ENCODE measurements at regions of chr9 and their contacts with region 1.

Region 1: DNA sequence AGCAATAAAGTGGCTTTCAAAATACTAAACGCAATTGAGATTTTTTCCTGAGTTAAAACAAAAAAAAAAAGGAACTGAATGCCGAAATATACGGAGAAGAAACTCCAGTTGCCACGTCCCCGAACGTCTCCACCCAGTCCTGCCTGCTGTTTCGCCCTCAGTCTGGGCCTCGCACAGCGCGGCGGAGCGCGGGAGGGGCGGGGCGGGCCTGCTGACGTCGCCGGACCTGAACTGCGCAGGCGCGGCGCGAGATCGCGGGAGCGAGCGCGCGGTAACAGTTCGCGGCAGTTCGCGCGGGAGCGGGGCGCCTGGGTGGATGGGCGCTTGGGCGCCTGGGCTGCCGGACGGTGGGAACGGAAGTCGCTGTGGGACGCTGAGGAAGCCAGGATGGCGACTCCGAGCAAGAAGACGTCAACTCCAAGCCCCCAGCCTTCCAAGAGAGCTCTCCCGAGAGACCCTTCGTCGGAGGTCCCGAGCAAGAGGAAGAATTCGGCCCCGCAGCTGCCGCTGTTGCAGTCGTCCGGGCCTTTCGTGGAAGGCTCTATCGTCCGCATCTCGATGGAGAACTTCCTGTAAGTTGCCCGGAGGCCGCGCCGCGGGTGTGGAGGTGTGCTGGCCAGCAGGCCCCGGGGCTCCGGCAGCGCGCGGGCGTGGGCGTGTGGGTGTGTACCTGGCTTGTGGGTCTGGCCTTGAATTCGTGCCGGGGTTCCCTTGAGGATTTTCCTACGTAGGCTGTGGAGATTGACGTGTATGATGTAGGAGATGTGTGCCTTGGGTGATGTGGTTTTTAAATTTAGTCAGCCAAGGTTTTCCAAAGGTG is at the start of gene SMC5:
- DNase-seq: peak; percentile 95
- ATAC-seq: peak; percentile 86
- H3K4me3 ChIP-seq: peak within 1 kb of the TSS; percentile 72 to 96 (median 93)
- H3K4me3 Mint-ChIP-seq: peak within 1 kb of the TSS; percentile 92
- H3K27ac ChIP-seq: peak within 1 kb of the TSS; percentile 89 to 93
- H3K27ac Mint-ChIP-seq: peak within 1 kb of the TSS; percentile 97
- H3K4me1 ChIP-seq: peaks cover 26 to 34% of the 10 kb centered on the region in 2 donors
- H3K4me1 Mint-ChIP-seq: peaks cover 45% of the 10 kb centered on the region
- H3K27me3 ChIP-seq: no peaks in the 10 kb centered on the region
- H3K27me3 Mint-ChIP-seq: no peaks in the 10 kb centered on the region
- CTCF ChIP-seq: no peak
- total RNA-seq, gene SMC5: 75.0 and 82.1 TPM in 2 replicates

Region 2: DNA sequence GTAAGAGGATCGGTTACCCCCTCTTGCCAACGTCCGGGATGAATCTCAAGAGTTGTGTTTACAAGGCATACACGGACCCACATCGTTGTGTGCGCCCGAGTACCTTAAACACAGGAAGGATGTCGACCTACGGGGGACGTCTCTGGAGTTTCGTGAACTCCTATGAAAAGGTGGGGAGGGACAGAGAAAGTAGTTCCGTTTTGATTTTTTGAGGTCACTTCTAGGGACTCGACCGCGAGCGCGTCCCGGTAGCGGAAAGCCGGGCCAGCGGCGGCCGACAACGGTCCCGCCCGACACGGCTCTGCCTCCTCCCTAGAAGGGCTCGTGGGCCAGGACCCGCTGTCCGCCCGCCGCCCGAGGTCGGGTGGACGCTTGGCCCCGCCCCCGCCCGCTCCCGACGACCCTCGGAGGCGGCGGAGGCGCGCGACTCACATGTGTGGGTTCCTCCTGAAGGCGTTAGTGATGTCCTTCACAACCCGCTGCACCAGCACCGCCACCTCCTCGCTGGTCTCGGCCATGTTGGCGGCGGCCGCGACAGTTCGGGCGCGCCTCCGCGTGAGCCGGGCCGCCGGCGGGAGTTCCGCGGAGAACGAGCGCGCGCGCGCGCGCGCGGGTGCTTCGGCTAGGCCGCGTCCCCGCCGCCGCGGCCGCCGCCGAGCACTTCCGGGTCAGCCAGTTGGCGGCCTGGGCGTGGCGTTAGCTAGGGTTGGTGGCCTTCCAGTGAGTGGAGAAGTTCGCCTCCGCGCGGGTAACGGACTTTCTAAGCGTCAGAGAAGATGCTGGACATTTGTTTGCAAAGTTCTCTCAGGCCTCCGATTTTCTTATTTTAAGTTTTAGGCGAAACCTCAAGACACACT is 499.3 kb before region 1 on chr9 and contains the start of gene PTAR1:
- CTCF ChIA-PET with region 1: no interaction called
- POLR2A ChIA-PET with region 1: no interaction called
- intact Hi-C with region 1: loop called (anchors 1 kb)
- DNase-seq: peak; percentile 95
- ATAC-seq: peak; percentile 86
- H3K4me3 ChIP-seq: peak within 1 kb of the TSS; percentile 84 to 90 (median 89)
- H3K4me3 Mint-ChIP-seq: peak within 1 kb of the TSS; percentile 97
- H3K27ac ChIP-seq: peak within 1 kb of the TSS; percentile 77 to 94
- H3K27ac Mint-ChIP-seq: peak within 1 kb of the TSS; percentile 97
- H3K4me1 ChIP-seq: peaks cover 12 to 13% of the 10 kb centered on the region in 2 donors
- H3K4me1 Mint-ChIP-seq: peaks cover 26% of the 10 kb centered on the region
- H3K27me3 ChIP-seq: no peaks in the 10 kb centered on the region
- H3K27me3 Mint-ChIP-seq: no peaks in the 10 kb centered on the region
- CTCF ChIP-seq: no peak
- total RNA-seq, gene PTAR1: 72.1 and 82.7 TPM in 2 replicates

Region 3: DNA sequence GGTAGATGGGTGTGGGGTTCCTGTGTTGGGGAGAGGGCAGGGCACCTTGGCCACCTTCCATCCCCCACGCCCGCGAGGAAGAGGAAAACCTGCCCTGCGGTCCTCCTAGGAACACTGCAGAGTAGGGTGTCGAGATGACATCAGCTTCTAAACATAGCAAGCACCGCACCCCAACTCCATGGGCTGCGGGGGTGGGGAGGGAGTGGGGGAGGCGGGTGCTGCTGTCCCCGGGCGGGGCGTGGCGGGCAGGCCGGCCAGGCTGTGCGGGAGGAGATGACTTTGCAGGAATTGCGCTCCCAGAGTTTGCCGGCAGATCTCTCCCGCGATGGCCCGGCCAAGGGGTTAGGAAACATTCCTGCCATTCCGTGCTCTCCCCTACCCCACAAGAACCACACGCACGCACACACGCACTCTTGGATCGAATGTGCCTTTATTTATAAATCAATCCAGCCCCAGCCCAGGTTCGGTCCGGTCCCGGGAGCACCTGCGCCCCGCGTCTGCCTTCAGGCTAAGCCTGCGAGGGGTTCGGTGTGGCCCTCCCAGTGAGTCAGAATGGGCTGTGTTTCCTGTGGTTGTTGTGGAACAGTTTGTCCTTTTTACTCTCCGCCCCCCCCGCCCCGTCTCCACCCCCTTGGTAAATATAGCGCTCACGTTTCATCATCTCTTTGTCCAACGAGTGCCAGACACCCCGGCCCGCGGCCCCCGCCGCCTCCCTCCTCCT is 160.8 kb after region 1 on chr9:
- CTCF ChIA-PET with region 1: interaction called, 3 read pairs
- POLR2A ChIA-PET with region 1: no interaction called
- intact Hi-C with region 1: loop called (anchors 1 kb)
- DNase-seq: peak; percentile 89
- ATAC-seq: peak; percentile 51
- H3K4me3 ChIP-seq: peak overlapping the region; percentile 38 to 89 (median 77)
- H3K4me3 Mint-ChIP-seq: peak overlapping the region; percentile 96
- H3K27ac ChIP-seq: peak overlapping the region; percentile 94 to 99
- H3K27ac Mint-ChIP-seq: peak overlapping the region; percentile 100
- H3K4me1 ChIP-seq: peaks cover 21 to 36% of the 10 kb centered on the region in 2 donors
- H3K4me1 Mint-ChIP-seq: peaks cover 43% of the 10 kb centered on the region
- H3K27me3 ChIP-seq: no peaks in the 10 kb centered on the region
- H3K27me3 Mint-ChIP-seq: no peaks in the 10 kb centered on the region
- CTCF ChIP-seq: no peak

Region 4: GRCh38 chr9:70609542-70610286 is 350.8 kb after region 1 on chr9:
- CTCF ChIA-PET with region 1: no interaction called
- POLR2A ChIA-PET with region 1: no interaction called
- intact Hi-C with region 1: loop called (anchors 5 kb)
- DNase-seq: no peak
- ATAC-seq: no peak
- H3K4me3 ChIP-seq: no peak overlapping the region
- H3K4me3 Mint-ChIP-seq: no peak overlapping the region
- H3K27ac ChIP-seq: no peak overlapping the region
- H3K27ac Mint-ChIP-seq: no peak overlapping the region
- H3K4me1 ChIP-seq: peaks cover 7 to 8% of the 10 kb centered on the region in 2 donors
- H3K4me1 Mint-ChIP-seq: peaks cover 10% of the 10 kb centered on the region
- H3K27me3 ChIP-seq: no peaks in the 10 kb centered on the region
- H3K27me3 Mint-ChIP-seq: peaks cover 8% of the 10 kb centered on the region
- CTCF ChIP-seq: no peak